H1 (cell line): ENCODE measurements at regions of chr20 and their contacts with region 1.

Region 1: GRCh38 chr20:13286607-13287006 is 65.5 kb downstream of the ISM1 start:
- DNase-seq: no peak
- H3K4me3 ChIP-seq: no peak overlapping the region
- H3K27ac ChIP-seq: no peak overlapping the region
- H3K4me1 ChIP-seq: peaks cover 0 to 2% (median 0%) of the 10 kb centered on the region in 4 experiments; a peak in 1 of 7 replicates
- H3K27me3 ChIP-seq: no peaks in the 10 kb centered on the region
- CTCF ChIP-seq: no peak
- EP300 ChIP-seq: no peak
- POLR2A ChIP-seq: no peak
- RAD21 ChIP-seq: no peak

Region 2: GRCh38 chr20:12528591-12529041 is 758.0 kb before region 1 on chr20:
- CTCF ChIA-PET with region 1: no interaction called
- POLR2A ChIA-PET with region 1: no interaction called
- DNase-seq: no peak
- H3K4me3 ChIP-seq: no peak overlapping the region
- H3K27ac ChIP-seq: no peak overlapping the region
- H3K4me1 ChIP-seq: no peaks in the 10 kb centered on the region
- H3K27me3 ChIP-seq: no peaks in the 10 kb centered on the region
- CTCF ChIP-seq: no peak
- EP300 ChIP-seq: no peak
- POLR2A ChIP-seq: no peak
- RAD21 ChIP-seq: no peak

Region 3: GRCh38 chr20:13119583-13119982 is 167.0 kb before region 1 on chr20:
- CTCF ChIA-PET with region 1: interaction called, 13 read pairs
- POLR2A ChIA-PET with region 1: no interaction called
- DNase-seq: peak in 1 of 2 experiments; percentile 15
- H3K4me3 ChIP-seq: no peak overlapping the region
- H3K27ac ChIP-seq: no peak overlapping the region
- H3K4me1 ChIP-seq: no peaks in the 10 kb centered on the region; a peak in 1 of 7 replicates
- H3K27me3 ChIP-seq: no peaks in the 10 kb centered on the region
- CTCF ChIP-seq: peak in 2 of 3 experiments; percentile 86 to 89; a peak in 3 of 4 replicates
- EP300 ChIP-seq: no peak
- POLR2A ChIP-seq: no peak
- RAD21 ChIP-seq: peak; percentile 92 to 94

Region 4: DNA sequence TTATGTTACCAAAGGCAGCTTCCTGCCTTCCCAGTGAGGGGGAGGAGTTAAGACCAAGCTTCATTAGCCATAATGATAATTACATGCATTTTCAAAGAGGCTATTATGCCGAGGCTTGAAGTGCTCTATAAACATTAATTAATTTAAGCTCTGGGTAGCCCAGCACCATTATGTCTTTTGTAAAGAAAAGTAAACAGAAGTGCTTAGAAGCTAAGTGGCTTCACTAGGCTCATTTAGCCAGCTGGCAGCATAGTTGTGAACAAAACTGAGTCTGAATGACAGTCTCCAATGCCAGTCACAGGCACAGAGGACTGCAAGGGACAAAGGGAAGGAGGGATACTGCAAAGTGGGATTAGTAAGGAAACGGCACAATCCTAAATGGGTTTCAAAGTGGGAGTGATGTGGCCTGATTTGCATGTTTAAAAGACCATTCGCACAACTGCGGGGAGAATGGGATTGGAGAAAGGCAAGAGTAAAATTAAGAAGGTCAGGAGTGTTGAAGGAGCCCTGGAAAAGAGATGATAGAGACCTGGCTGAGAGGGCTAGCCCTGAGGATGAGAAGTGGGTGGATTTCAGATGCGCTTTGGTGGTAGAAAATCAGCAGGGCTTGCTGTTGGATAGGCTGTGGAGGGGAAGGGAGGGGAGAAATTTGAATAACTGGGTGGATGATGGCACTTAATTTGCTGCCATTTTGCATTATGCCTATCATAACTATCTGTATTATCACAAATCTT is 85.7 kb before region 1 on chr20:
- CTCF ChIA-PET with region 1: no interaction called
- POLR2A ChIA-PET with region 1: no interaction called
- DNase-seq: no peak
- H3K4me3 ChIP-seq: no peak overlapping the region
- H3K27ac ChIP-seq: no peak overlapping the region
- H3K4me1 ChIP-seq: peaks cover 2 to 10% (median 4%) of the 10 kb centered on the region in 4 experiments; a peak in 5 of 7 replicates
- H3K27me3 ChIP-seq: no peaks in the 10 kb centered on the region
- CTCF ChIP-seq: no peak
- EP300 ChIP-seq: no peak
- POLR2A ChIP-seq: no peak
- RAD21 ChIP-seq: no peak

Region 5: DNA sequence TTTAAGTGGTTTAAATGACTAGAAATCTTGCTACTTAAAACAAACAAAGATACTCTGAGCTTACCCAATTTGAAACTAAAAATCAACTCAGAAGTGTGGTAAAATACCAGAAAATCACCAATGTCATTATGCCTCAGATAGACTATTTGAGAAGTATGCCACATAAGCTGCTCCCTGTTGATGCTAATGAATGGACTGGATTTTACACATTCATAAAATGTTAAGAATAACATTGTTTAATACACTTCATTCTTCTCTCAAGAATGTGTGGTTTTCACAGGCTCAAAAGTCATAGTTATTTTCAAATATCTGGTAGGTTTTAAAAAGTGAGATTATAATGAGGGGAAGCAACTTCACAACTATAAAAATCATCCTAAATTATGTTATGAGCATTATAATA is 181.6 kb after region 1 on chr20:
- CTCF ChIA-PET with region 1: no interaction called
- POLR2A ChIA-PET with region 1: no interaction called
- DNase-seq: no peak
- H3K4me3 ChIP-seq: no peak overlapping the region
- H3K27ac ChIP-seq: no peak overlapping the region
- H3K4me1 ChIP-seq: no peaks in the 10 kb centered on the region
- H3K27me3 ChIP-seq: no peaks in the 10 kb centered on the region
- CTCF ChIP-seq: no peak
- EP300 ChIP-seq: no peak
- POLR2A ChIP-seq: no peak
- RAD21 ChIP-seq: no peak